Naive thymus-derived CD4-positive, alpha-beta T cell (primary cell): ENCODE measurements at regions of chr11 and their contacts with region 1.

Region 1: DNA sequence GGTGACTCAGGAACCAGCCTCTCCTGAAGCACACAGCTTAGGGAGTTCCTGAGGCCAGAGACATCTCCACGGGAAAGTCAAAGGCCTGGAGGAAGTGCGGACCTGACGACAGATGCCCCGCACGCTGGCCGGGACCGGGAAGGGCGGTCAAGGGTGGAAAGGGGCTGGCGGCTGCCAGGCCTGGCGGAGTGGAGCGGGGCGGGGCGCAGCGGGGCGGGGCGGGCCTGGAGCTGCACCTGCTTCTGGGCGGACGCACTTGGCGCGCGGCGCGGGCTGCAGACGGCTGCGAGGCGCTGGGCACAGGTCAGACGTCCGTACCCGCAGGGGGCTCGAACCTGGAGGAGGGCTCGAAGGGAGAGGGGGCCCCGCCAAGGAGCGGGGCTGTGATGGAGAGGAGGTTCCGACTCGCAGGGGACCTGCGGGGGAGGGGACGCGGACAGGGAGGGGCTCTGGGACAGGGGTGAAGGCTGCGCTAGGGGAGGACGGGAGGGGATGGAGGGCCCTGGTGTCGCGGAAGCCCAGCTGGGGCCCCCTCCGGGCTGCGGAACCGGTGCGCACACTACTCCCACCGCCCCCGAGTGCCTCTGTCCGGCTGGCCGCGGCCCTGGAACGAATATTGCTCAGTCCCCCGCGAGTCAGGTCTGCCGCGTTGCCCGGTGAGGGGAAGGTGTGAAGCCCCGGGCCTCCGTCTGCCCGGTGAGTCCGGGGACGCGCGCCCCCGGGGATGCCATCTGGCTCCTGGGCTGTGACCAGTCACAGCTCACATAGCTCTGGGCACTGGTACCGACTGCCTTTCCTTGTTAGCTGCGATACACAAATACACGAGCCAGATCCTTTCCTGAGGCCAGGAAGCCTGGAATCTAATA is at the start of gene TMEM45B:
- DNase-seq: peak; percentile 27 to 57 (median 45)
- ATAC-seq: peak; percentile 38
- H3K4me3 ChIP-seq: peak within 1 kb of the TSS; percentile 54
- H3K4me3 Mint-ChIP-seq: peak within 1 kb of the TSS; percentile 83 to 91 (median 88)
- H3K27ac ChIP-seq: peak within 1 kb of the TSS; percentile 31
- H3K27ac Mint-ChIP-seq: peak within 1 kb of the TSS; percentile 84 to 99 (median 95)
- H3K4me1 ChIP-seq: peaks cover 5 to 9% of the 10 kb centered on the region in 2 donors
- H3K4me1 Mint-ChIP-seq: peaks cover 29 to 79% (median 61%) of the 10 kb centered on the region in 7 donors
- H3K27me3 ChIP-seq: no peaks in the 10 kb centered on the region
- H3K27me3 Mint-ChIP-seq: peaks cover 0 to 75% (median 17%) of the 10 kb centered on the region in 5 donors
- total RNA-seq, gene TMEM45B: 2.3 to 40.8 (median 3.6) TPM

Region 2: DNA sequence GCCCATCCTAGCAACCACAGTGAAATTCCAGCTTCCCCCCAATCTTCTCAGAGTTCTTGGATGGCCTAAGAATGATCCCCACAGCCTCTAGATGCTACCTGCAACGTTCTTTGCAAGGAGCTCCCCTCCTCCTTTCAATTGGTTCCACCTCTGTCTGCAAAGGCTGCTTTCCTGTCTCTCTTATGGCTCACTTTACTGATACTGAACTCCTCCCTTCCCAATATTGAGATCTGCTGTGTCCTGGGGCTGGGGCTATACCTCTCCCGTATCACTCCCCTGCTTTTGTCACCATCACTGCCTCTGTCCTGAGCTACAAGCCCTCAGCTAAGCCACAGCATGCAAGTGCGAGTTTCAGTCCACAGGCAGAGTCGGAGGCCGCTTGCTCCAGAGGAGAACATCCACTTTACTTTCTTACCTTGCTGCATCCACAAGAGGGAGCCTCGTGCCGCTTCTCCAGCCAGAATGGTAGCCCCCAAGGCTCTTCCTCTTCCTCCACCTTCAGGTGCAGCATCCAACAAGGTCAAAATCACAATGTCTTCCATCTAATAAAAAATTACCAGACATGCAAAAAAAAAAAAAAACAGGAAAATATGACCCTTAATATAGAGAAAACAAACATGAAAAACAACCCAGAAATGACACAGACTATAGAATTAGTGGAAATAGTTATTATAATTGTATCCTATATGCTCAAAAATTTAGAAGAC is 48.8 kb before region 1 on chr11:
- CTCF ChIA-PET with region 1: no interaction called
- POLR2A ChIA-PET with region 1: interaction called, 5 read pairs
- intact Hi-C with region 1: loop called in 1 of 2 experiments (anchors 5 kb)
- DNase-seq: peak in 6 of 9 donors; percentile 14 to 39 (median 20)
- ATAC-seq: peak; percentile 40
- H3K4me3 ChIP-seq: no peak overlapping the region
- H3K4me3 Mint-ChIP-seq: peak overlapping the region in 2 of 10 donors; percentile 1 to 50
- H3K27ac ChIP-seq: no peak overlapping the region
- H3K27ac Mint-ChIP-seq: peak overlapping the region in 2 of 9 donors; percentile 6 to 29
- H3K4me1 ChIP-seq: no peaks in the 10 kb centered on the region
- H3K4me1 Mint-ChIP-seq: peaks cover 0 to 11% (median 5%) of the 10 kb centered on the region in 7 donors
- H3K27me3 ChIP-seq: no peaks in the 10 kb centered on the region
- H3K27me3 Mint-ChIP-seq: peaks cover 0 to 10% (median 4%) of the 10 kb centered on the region in 5 donors

Region 3: DNA sequence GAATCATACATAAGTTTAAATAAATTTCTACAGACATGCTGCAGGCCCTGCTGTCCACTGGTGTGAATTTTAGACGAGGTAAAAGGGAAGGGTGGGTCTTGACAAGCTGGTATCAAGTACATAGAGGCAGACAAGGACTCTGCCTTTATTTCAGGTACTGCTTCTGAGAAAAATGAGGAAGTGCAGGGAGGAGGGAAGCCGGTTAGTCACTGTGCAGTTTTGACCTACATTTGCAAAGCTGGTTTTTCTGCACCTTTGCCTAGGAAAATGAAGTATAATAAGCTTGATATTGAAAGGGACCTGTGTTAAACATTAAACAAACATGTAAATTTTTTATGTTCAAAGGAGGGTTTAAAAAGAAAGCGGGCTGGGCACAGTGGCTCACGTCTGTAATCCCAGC is 24.4 kb after region 1 on chr11:
- CTCF ChIA-PET with region 1: no interaction called
- POLR2A ChIA-PET with region 1: interaction called, 14 read pairs
- intact Hi-C with region 1: no loop called
- DNase-seq: no peak
- ATAC-seq: no peak
- H3K4me3 ChIP-seq: no peak overlapping the region
- H3K4me3 Mint-ChIP-seq: peak overlapping the region in 7 of 10 donors; percentile 26 to 70 (median 44)
- H3K27ac ChIP-seq: no peak overlapping the region
- H3K27ac Mint-ChIP-seq: peak overlapping the region in 7 of 9 donors; percentile 3 to 88 (median 66)
- H3K4me1 ChIP-seq: peaks cover 0 to 12% of the 10 kb centered on the region in 2 donors
- H3K4me1 Mint-ChIP-seq: peaks cover 15 to 76% (median 46%) of the 10 kb centered on the region in 7 donors
- H3K27me3 ChIP-seq: no peaks in the 10 kb centered on the region
- H3K27me3 Mint-ChIP-seq: peaks cover 0 to 8% (median 0%) of the 10 kb centered on the region in 5 donors

Region 4: DNA sequence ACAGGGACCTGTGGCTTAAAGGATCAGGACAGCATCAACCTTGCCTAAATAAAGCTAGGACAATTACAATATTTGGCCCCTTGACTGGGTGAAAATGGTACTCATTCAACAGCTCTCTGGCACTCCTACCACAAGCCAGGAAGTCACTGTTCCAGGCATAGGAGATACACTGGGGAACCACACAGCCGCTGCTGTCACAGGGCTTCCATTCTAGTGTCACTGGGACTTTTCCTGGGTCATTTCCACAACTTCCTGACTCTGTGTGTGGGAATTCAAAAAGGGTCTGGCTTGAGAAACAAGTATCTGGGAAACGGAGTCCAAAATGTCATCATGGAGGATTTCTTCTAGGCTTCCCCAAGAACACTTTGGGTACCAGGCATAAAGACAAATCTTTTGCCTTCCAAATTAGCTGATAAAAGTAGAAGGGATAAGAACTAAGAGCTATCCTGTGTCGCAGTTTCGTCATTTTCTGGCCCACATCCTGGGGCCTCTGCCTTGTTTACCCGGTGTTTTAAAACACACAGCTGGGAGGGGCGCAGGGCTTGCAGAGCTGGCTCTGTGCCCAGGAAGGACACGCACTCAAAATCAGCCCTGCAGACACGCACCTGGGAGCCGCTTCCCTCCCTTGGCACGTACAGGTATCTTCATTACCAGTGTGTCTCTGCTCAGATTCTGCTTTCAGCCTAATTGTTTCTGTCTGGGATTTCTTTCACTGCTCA is 37.8 kb after region 1 on chr11:
- CTCF ChIA-PET with region 1: interaction called, 8 read pairs
- POLR2A ChIA-PET with region 1: interaction called, 79 read pairs
- intact Hi-C with region 1: loop called (anchors 1 kb)
- DNase-seq: peak; percentile 34 to 96 (median 93)
- ATAC-seq: peak; percentile 94
- H3K4me3 ChIP-seq: peak overlapping the region; percentile 21
- H3K4me3 Mint-ChIP-seq: peak overlapping the region; percentile 49 to 84 (median 74)
- H3K27ac ChIP-seq: peak overlapping the region; percentile 68
- H3K27ac Mint-ChIP-seq: peak overlapping the region; percentile 94 to 99 (median 98)
- H3K4me1 ChIP-seq: peaks cover 14 to 24% of the 10 kb centered on the region in 2 donors
- H3K4me1 Mint-ChIP-seq: peaks cover 17 to 68% (median 51%) of the 10 kb centered on the region in 7 donors
- H3K27me3 ChIP-seq: no peaks in the 10 kb centered on the region
- H3K27me3 Mint-ChIP-seq: peaks cover 0 to 2% (median 0%) of the 10 kb centered on the region in 5 donors

Region 5: DNA sequence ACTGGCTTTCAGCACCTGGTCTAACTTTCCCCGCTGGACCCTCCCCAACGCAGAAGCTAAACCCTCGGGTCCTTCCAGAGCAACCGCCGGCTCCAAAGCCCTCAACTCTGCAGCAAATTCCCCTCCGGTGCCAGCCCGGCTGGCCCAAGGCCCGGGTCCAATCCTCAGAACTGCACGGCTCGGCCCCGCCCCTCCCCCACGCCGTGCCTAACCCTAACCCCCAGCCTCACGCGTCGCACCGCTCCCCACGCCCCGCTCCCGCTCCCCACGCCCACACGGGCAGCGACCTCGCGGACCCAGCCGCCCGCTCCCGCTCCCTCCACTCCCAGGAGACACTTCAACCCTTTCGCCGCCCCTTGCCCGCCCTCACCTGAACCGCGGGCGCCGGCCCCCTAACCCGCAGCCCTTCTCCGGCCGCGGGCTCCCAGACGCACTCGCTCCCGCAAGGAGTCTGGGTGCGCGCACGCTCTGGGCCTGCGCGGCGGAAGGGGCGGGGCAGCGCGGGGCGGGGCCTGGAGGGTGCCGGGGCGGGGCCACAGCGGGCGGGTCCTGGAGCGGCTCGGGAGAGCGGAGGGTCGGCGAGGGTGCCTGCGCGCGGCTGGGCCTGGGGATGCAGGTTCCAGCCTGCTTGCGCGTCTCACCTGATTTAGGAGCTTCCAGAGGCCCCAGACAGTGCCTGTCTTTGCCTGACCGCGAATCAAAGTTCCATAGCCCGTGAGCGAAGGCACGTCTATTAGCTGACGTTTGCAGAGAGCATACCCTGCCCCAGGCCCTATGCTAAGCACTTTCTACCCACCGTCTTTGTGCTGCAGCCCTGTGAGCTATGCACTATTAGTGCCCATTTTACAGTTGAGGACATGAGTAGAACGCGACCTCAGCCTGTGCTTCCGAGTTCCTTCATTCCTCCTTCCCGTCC is 79.6 kb after region 1 on chr11 and contains the start of gene NFRKB:
- CTCF ChIA-PET with region 1: interaction called, 3 read pairs
- POLR2A ChIA-PET with region 1: interaction called, 19 read pairs
- intact Hi-C with region 1: loop called (anchors 1 kb)
- DNase-seq: peak; percentile 75 to 95 (median 88)
- ATAC-seq: peak; percentile 99
- H3K4me3 ChIP-seq: peak within 1 kb of the TSS; percentile 76
- H3K4me3 Mint-ChIP-seq: peak within 1 kb of the TSS; percentile 86 to 96 (median 92)
- H3K27ac ChIP-seq: peak within 1 kb of the TSS; percentile 84
- H3K27ac Mint-ChIP-seq: peak within 1 kb of the TSS; percentile 82 to 95 (median 90)
- H3K4me1 ChIP-seq: peaks cover 9 to 18% of the 10 kb centered on the region in 2 donors
- H3K4me1 Mint-ChIP-seq: peaks cover 23 to 58% (median 44%) of the 10 kb centered on the region in 7 donors
- H3K27me3 ChIP-seq: no peaks in the 10 kb centered on the region
- H3K27me3 Mint-ChIP-seq: no peaks in the 10 kb centered on the region
- total RNA-seq, gene NFRKB: 40.4 to 81.3 (median 56.2) TPM